Left ventricle myocardium superior (tissue), 1 donor: ENCODE measurements at regions of chr1 and their contacts with region 1.

Region 1: GRCh38 chr1:84620720-84621313 is 46.6 kb upstream of the CTBS start:
- DNase-seq: peak; percentile 86
- ATAC-seq: peak; percentile 96

Region 2: GRCh38 chr1:84156210-84156621 is 464.6 kb before region 1 on chr1:
- intact Hi-C with region 1: no loop called
- DNase-seq: no peak
- ATAC-seq: no peak

Region 3: GRCh38 chr1:84753516-84754385 is 132.9 kb after region 1 on chr1:
- intact Hi-C with region 1: loop called (anchors 10 kb)
- DNase-seq: peak; percentile 75
- ATAC-seq: peak; percentile 89